Head of caudate nucleus (tissue), 42 donors: ENCODE measurements at regions of chr14 and their contacts with region 1.

Region 1: GRCh38 chr14:50714450-50715073 is 46.5 kb upstream of the SAV1 start:
- DNase-seq: peak in 12 of 42 donors; percentile 22 to 67 (median 38)

Region 2: DNA sequence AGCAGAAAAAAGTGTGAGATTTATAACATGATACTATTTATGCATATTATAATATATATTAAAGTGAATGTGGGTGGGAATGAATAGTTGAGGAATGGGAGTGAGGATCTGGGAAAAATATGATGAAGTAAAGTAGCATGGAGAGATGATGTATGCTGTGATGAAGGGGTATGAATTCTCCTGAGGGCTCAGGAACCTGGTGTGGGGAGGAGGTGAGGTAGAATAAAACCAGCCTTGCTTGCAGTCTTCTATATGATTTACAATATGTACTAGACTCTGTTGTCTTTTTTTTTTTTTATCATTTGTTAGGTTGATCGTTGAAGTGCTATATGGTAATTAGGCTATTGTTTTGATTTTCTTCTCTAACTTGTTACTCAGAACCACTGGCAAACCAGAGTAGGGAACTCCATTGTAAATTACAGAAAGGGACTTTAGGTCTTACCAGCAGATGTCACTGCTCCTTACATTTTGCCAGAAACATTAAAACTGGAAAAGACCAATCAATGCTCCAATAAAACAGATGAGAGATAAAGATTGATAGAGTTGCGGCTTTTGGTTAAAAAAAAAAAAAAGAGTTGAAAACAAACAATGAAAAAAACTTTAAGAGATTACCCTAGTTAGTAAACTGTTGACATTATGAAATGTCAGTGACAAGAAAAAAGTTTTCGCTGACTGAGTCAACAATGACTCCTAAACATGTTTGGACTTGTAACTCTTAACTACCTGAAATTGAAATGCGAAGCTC is 114.7 kb before region 1 on chr14:
- intact Hi-C with region 1: loop called (anchors 5 kb)
- DNase-seq: peak in 5 of 42 donors; percentile 15 to 58 (median 36)

Region 3: DNA sequence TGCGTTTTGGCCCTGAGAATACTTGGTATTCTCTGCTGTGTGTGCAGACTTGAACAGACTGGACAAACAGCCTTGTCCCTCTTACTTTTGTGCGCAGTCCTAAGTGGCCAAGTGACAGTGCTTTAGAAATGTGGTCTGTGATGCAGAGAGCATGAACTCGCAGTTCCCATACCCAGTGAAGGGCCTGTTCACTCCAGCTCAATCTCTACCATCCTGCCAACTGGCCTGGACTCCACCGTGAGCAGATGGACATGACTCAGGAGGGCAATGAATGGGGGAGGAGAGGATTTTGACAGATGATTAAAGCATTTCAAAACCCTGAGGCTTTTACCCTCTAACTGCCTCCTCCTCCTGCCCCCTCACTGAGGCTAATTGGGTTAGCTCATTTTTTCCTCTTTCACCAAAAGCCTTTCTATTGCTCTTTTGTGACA is 292.2 kb after region 1 on chr14:
- intact Hi-C with region 1: no loop called
- DNase-seq: peak in 41 of 42 donors; percentile 47 to 93 (median 73)